ENCODE measurements at regions of chr13 and their contacts with region 1.

Region 1: DNA sequence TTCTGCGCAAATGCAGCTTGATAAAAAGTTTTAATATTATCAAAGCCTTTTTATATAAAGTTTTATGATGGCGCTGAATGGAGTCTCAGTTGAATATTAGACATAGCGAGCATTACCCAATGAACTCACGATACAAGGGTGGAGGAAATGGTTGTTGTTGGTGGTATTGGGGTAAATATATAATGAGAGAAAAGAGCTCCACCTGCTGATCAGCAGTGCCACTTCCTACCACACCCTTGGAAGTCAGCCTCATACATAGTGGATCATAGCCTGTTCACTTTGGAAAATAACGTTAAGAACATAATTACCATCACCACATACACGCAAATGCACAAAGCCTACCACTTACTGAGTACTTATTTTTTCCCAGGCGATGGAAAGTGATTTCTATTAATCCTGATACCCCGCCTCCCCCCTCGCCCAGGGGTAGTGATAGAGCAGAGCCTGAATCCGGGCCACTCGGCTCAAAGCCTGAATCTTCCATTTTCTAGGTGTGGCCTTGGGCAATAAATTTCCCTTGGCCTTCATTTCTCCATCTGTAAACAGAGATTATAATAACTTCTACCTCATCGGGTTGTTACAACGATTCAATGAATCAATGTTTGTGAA is 358.3 kb downstream of the KLF5 start:
- DNase-seq: no peak
- H3K4me3 ChIP-seq: no peak overlapping the region
- H3K27ac ChIP-seq: no peak overlapping the region
- H3K4me1 ChIP-seq: no peaks in the 10 kb centered on the region
- H3K27me3 ChIP-seq: no peaks in the 10 kb centered on the region
- CTCF ChIP-seq: no peak
- POLR2A ChIP-seq: no peak

Region 2: GRCh38 chr13:72839831-72840426 is 577.2 kb before region 1 on chr13:
- CTCF ChIA-PET with region 1: interaction called, 5 read pairs
- POLR2A ChIA-PET with region 1: no interaction called
- dilution Hi-C with region 1: no loop called
- intact Hi-C with region 1: loop called (anchors 5 kb)
- DNase-seq: peak; percentile 45
- H3K4me3 ChIP-seq: no peak overlapping the region
- H3K27ac ChIP-seq: no peak overlapping the region
- H3K4me1 ChIP-seq: no peaks in the 10 kb centered on the region
- H3K27me3 ChIP-seq: no peaks in the 10 kb centered on the region
- CTCF ChIP-seq: peak; percentile 69 to 75
- POLR2A ChIP-seq: no peak

Measured in endothelial cell of umbilical vein (primary cell).